ENCODE measurements at regions of chr20 and their contacts with region 1.

Region 1: GRCh38 chr20:44085616-44086434 is 101.2 kb downstream of the JPH2 start:
- DNase-seq: no peak
- H3K4me3 Mint-ChIP-seq: no peak overlapping the region
- H3K27ac Mint-ChIP-seq: no peak overlapping the region
- H3K4me1 Mint-ChIP-seq: peaks cover 6% of the 10 kb centered on the region
- H3K27me3 Mint-ChIP-seq: no peaks in the 10 kb centered on the region
- CTCF ChIP-seq: no peak

Region 2: GRCh38 chr20:43925801-43926200 is 160.0 kb before region 1 on chr20:
- CTCF ChIA-PET with region 1: interaction called, 3 read pairs
- POLR2A ChIA-PET with region 1: no interaction called
- intact Hi-C with region 1: loop called (anchors 2 kb)
- DNase-seq: peak; percentile 45
- H3K4me3 Mint-ChIP-seq: no peak overlapping the region
- H3K27ac Mint-ChIP-seq: no peak overlapping the region
- H3K4me1 Mint-ChIP-seq: peaks cover 14% of the 10 kb centered on the region
- H3K27me3 Mint-ChIP-seq: no peaks in the 10 kb centered on the region
- CTCF ChIP-seq: no peak